Mammary epithelial cell (primary cell): ENCODE measurements at regions of chr5 and their contacts with region 1.

Region 1: DNA sequence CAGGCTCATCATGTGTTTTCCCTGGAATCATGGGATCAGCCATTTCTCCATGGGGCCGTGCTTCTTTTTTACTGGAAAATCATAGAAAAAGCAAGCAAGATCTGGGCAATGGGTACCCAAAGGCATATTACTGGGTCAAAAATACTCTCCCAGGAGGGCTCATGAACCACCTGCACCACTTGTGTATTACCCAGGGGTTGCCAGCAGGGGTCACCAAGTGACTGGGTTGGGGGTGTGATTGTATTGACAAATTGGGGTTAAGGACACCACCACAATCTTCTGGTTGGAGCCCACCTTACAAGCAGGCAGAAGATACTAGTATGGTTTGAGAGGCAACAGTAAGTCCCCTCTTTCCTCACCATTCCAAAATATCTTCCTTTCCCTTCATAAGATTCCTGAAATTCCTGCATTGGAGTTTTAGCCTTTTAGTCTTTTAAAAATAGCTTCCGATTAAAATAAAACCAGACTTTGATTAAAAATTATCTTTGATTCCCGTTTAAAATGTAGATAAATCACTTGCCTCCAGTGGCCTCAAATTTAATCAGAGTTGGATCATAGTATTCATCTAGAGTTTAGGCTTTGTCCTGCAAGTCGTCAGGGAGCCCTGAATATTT is 603.3 kb downstream of the KIF4B start:
- DNase-seq: peak; percentile 14
- H3K4me3 ChIP-seq: no peak overlapping the region
- H3K27ac ChIP-seq: no peak overlapping the region
- H3K4me1 ChIP-seq: no peaks in the 10 kb centered on the region
- H3K27me3 ChIP-seq: no peaks in the 10 kb centered on the region
- CTCF ChIP-seq: peak; percentile 74 to 81

Region 2: GRCh38 chr5:156815988-156816599 is 1199.2 kb after region 1 on chr5:
- CTCF ChIA-PET with region 1: no interaction called
- dilution Hi-C with region 1: no loop called
- in situ Hi-C with region 1: no loop called
- intact Hi-C with region 1: loop called (anchors 10 kb)
- DNase-seq: no peak
- H3K4me3 ChIP-seq: no peak overlapping the region
- H3K27ac ChIP-seq: no peak overlapping the region
- H3K4me1 ChIP-seq: no peaks in the 10 kb centered on the region
- H3K27me3 ChIP-seq: no peaks in the 10 kb centered on the region
- CTCF ChIP-seq: peak in 1 of 2 donors; percentile 5